ENCODE measurements at regions of chr2 and their contacts with region 1.

Region 1: DNA sequence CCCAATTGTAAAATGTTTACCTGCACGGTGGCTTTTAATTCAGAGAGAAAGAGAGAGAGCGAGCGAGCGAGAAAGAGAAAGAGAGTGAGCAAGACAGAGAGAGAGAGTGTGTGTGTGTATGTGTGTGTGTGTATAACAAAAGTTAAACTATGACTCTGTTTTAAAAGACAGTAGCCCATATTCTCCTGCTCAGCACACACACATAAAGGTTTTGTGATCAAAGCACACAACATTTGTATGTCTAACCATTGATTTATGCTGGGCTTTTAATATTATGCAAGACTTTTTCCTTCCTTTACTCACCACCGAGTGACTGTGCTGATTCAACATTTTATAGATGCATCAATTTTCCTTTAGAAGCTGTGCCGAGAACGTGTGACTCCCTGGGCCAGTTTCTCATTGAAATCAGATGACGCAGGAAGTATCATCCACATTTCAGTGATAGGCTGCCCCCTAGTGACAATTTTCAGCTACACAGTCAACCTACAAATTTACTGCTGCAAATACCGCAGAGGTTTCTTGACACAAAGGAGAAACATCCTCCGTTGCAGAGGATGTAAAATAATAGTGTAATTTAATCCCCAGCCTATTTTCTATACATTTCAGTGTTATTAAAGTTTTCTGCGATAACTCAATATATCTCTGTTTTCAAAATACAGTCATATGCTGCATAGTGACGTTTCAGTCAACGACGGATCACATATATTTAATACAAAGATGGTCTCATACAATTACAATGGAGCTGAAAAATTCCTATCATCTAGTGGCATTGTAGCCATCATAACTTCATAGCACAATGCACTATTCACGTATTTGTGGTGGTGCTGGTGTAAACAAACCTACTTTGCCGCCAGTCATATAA is 165.9 kb upstream of the TANK start:
- DNase-seq: peak; percentile 89
- H3K4me3 ChIP-seq: no peak overlapping the region
- H3K27ac ChIP-seq: no peak overlapping the region
- H3K4me1 ChIP-seq: no peaks in the 10 kb centered on the region
- H3K27me3 ChIP-seq: no peaks in the 10 kb centered on the region
- CTCF ChIP-seq: peak; percentile 67 to 80

Region 2: GRCh38 chr2:160087854-160088745 is 906.3 kb before region 1 on chr2:
- CTCF ChIA-PET with region 1: interaction called, 5 read pairs
- dilution Hi-C with region 1: no loop called
- in situ Hi-C with region 1: loop called in 1 of 2 experiments (anchors 25 kb)
- intact Hi-C with region 1: loop called (anchors 1 kb)
- DNase-seq: peak; percentile 32
- H3K4me3 ChIP-seq: no peak overlapping the region
- H3K27ac ChIP-seq: no peak overlapping the region
- H3K4me1 ChIP-seq: peaks cover 23% of the 10 kb centered on the region
- H3K27me3 ChIP-seq: no peaks in the 10 kb centered on the region
- CTCF ChIP-seq: peak; percentile 37 to 41

Region 3: GRCh38 chr2:160109936-160110673 is 884.3 kb before region 1 on chr2:
- CTCF ChIA-PET with region 1: no interaction called
- dilution Hi-C with region 1: no loop called
- in situ Hi-C with region 1: no loop called
- intact Hi-C with region 1: loop called (anchors 1 kb)
- DNase-seq: peak; percentile 33
- H3K4me3 ChIP-seq: no peak overlapping the region
- H3K27ac ChIP-seq: peak overlapping the region; percentile 31
- H3K4me1 ChIP-seq: peaks cover 21% of the 10 kb centered on the region
- H3K27me3 ChIP-seq: no peaks in the 10 kb centered on the region
- CTCF ChIP-seq: peak; percentile 81 to 84

Region 4: GRCh38 chr2:160252278-160252887 is 742.0 kb before region 1 on chr2:
- CTCF ChIA-PET with region 1: no interaction called
- dilution Hi-C with region 1: no loop called
- in situ Hi-C with region 1: no loop called
- intact Hi-C with region 1: loop called (anchors 10 kb)
- DNase-seq: no peak
- H3K4me3 ChIP-seq: no peak overlapping the region
- H3K27ac ChIP-seq: no peak overlapping the region
- H3K4me1 ChIP-seq: peaks cover 16% of the 10 kb centered on the region
- H3K27me3 ChIP-seq: no peaks in the 10 kb centered on the region
- CTCF ChIP-seq: peak; percentile 76 to 83

Region 5: GRCh38 chr2:160324161-160324800 is 670.1 kb before region 1 on chr2:
- CTCF ChIA-PET with region 1: no interaction called
- dilution Hi-C with region 1: no loop called
- in situ Hi-C with region 1: no loop called
- intact Hi-C with region 1: loop called (anchors 1 kb)
- DNase-seq: peak; percentile 32
- H3K4me3 ChIP-seq: no peak overlapping the region
- H3K27ac ChIP-seq: no peak overlapping the region
- H3K4me1 ChIP-seq: no peaks in the 10 kb centered on the region
- H3K27me3 ChIP-seq: no peaks in the 10 kb centered on the region
- CTCF ChIP-seq: peak; percentile 80 to 84

Region 6: GRCh38 chr2:160353166-160353565 is 641.2 kb before region 1 on chr2:
- CTCF ChIA-PET with region 1: no interaction called
- dilution Hi-C with region 1: no loop called
- in situ Hi-C with region 1: no loop called
- intact Hi-C with region 1: loop called (anchors 1 kb)
- DNase-seq: no peak
- H3K4me3 ChIP-seq: no peak overlapping the region
- H3K27ac ChIP-seq: peak overlapping the region; percentile 53
- H3K4me1 ChIP-seq: peaks cover 28% of the 10 kb centered on the region
- H3K27me3 ChIP-seq: no peaks in the 10 kb centered on the region
- CTCF ChIP-seq: peak in 1 of 2 donors; percentile 51

Measured in mammary epithelial cell (primary cell).